ENCODE measurements at regions of chr2 and their contacts with region 1.

Region 1: GRCh38 chr2:151289369-151290088 is at the start of gene NMI:
- DNase-seq: peak; percentile 60 to 73 (median 66)
- H3K4me3 ChIP-seq: peak within 1 kb of the TSS; percentile 69 to 89 (median 78)
- H3K4me3 Mint-ChIP-seq: peak within 1 kb of the TSS; percentile 87 to 94
- H3K27ac ChIP-seq: peak within 1 kb of the TSS; percentile 97 to 98
- H3K27ac Mint-ChIP-seq: peak within 1 kb of the TSS; percentile 93 to 99 (median 97)
- H3K4me1 ChIP-seq: peaks cover 45 to 54% of the 10 kb centered on the region in 2 donors
- H3K4me1 Mint-ChIP-seq: peaks cover 53% of the 10 kb centered on the region
- H3K27me3 ChIP-seq: no peaks in the 10 kb centered on the region
- H3K27me3 Mint-ChIP-seq: no peaks in the 10 kb centered on the region
- CTCF ChIP-seq: no peak
- polyA plus RNA-seq, gene NMI: 21.8 to 83.0 (median 72.3) TPM

Region 2: GRCh38 chr2:149587220-149587949 is 1702.1 kb before region 1 on chr2 and contains the start of gene MMADHC:
- intact Hi-C with region 1: loop called in 1 of 2 experiments (anchors 5 kb)
- DNase-seq: peak; percentile 88 to 95 (median 94)
- H3K4me3 ChIP-seq: peak within 1 kb of the TSS; percentile 70 to 96 (median 90)
- H3K4me3 Mint-ChIP-seq: peak within 1 kb of the TSS; percentile 94 to 99
- H3K27ac ChIP-seq: peak within 1 kb of the TSS; percentile 91 to 99
- H3K27ac Mint-ChIP-seq: peak within 1 kb of the TSS; percentile 97 to 100 (median 99)
- H3K4me1 ChIP-seq: peaks cover 20 to 25% of the 10 kb centered on the region in 2 donors
- H3K4me1 Mint-ChIP-seq: peaks cover 29% of the 10 kb centered on the region
- H3K27me3 ChIP-seq: peaks cover 4 to 6% of the 10 kb centered on the region in 2 donors
- H3K27me3 Mint-ChIP-seq: peaks cover 0 to 9% (median 7%) of the 10 kb centered on the region in 3 donors
- CTCF ChIP-seq: no peak
- polyA plus RNA-seq, gene MMADHC: 20.5 to 119 (median 97.9) TPM

Region 3: GRCh38 chr2:151357359-151357758 is 67.8 kb after region 1 on chr2 and contains the start of gene TNFAIP6:
- intact Hi-C with region 1: loop called (anchors 5 kb)
- DNase-seq: peak; percentile 88 to 96 (median 95)
- H3K4me3 ChIP-seq: peak within 1 kb of the TSS in 2 of 3 experiments; percentile 19 to 57
- H3K4me3 Mint-ChIP-seq: peak within 1 kb of the TSS in 1 of 2 donors; percentile 57
- H3K27ac ChIP-seq: peak within 1 kb of the TSS in 1 of 2 donors; percentile 79
- H3K27ac Mint-ChIP-seq: peak within 1 kb of the TSS; percentile 82 to 94 (median 91)
- H3K4me1 ChIP-seq: peaks cover 9 to 30% of the 10 kb centered on the region in 2 donors
- H3K4me1 Mint-ChIP-seq: peaks cover 17% of the 10 kb centered on the region
- H3K27me3 ChIP-seq: no peaks in the 10 kb centered on the region
- H3K27me3 Mint-ChIP-seq: no peaks in the 10 kb centered on the region
- CTCF ChIP-seq: no peak
- polyA plus RNA-seq, gene TNFAIP6: 2.6 to 8.2 (median 3.5) TPM

Region 4: GRCh38 chr2:151363709-151364108 is 74.2 kb after region 1 on chr2:
- intact Hi-C with region 1: loop called (anchors 5 kb)
- DNase-seq: peak; percentile 75 to 98 (median 84)
- H3K4me3 ChIP-seq: peak overlapping the region in 1 of 3 experiments; percentile 21
- H3K4me3 Mint-ChIP-seq: peak overlapping the region; percentile 55
- H3K27ac ChIP-seq: peak overlapping the region; percentile 54 to 62
- H3K27ac Mint-ChIP-seq: peak overlapping the region; percentile 76 to 93 (median 88)
- H3K4me1 ChIP-seq: peaks cover 10 to 21% of the 10 kb centered on the region in 2 donors
- H3K4me1 Mint-ChIP-seq: peaks cover 12% of the 10 kb centered on the region
- H3K27me3 ChIP-seq: no peaks in the 10 kb centered on the region
- H3K27me3 Mint-ChIP-seq: no peaks in the 10 kb centered on the region
- CTCF ChIP-seq: no peak

Region 5: DNA sequence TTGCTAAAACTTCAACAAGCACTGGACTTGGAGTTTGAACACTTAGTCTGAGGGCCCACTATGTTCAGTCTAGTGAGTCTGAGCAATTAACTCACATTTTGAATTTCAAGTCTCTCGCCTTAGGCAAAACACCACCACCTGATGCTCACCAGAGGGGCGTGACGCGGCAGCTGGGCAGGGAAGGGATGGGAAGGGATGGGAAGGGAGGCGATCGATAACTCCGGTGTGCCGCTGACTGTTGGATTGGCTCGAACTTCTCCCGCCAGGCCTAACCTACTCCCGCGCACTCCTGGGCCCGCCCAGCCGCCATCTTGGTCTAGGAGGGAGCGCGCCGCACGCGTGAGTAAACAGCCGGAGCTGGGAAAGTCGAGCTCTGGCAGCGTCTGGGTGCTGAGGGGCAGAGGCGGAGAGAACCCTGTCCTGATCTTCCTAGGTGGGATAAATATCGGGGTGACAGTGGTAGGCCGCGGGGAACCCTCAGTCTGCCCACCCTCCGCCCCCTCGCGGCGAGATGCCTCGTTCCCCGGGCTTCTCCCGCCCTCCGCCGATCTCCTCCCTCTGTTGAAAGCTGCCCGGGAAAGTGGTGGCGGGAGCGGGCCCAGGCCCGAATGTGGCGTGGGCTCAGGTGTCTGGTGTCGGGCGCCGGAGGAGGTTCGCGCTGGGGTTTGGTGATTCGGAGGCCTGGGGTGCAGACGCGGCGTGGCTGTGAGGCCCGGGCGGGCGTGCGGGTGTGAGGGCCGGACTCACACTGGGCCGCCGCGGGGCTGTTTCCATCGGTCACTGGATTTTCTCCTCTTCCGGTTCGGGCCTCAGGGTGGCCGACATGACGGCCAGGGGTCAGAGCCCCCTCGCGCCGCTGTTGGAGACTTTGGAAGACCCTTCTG is 120.3 kb after region 1 on chr2 and contains the start of gene RIF1:
- intact Hi-C with region 1: loop called (anchors 5 kb)
- DNase-seq: peak; percentile 55 to 67 (median 65)
- H3K4me3 ChIP-seq: peak within 1 kb of the TSS; percentile 68 to 96 (median 91)
- H3K4me3 Mint-ChIP-seq: peak within 1 kb of the TSS; percentile 99
- H3K27ac ChIP-seq: peak within 1 kb of the TSS; percentile 89
- H3K27ac Mint-ChIP-seq: peak within 1 kb of the TSS; percentile 92 to 97 (median 95)
- H3K4me1 ChIP-seq: peaks cover 9 to 21% of the 10 kb centered on the region in 2 donors
- H3K4me1 Mint-ChIP-seq: peaks cover 18% of the 10 kb centered on the region
- H3K27me3 ChIP-seq: no peaks in the 10 kb centered on the region
- H3K27me3 Mint-ChIP-seq: peaks cover 0 to 4% (median 0%) of the 10 kb centered on the region in 3 donors
- CTCF ChIP-seq: peak; percentile 73
- polyA plus RNA-seq, gene RIF1: 3.8 to 9.3 (median 6.5) TPM

Region 6: GRCh38 chr2:152717228-152718075 is 1427.9 kb after region 1 on chr2 and contains the start of gene PRPF40A:
- intact Hi-C with region 1: loop called in 1 of 2 experiments (anchors 10 kb)
- DNase-seq: peak; percentile 98 to 99 (median 99)
- H3K4me3 ChIP-seq: peak within 1 kb of the TSS; percentile 88 to 96 (median 95)
- H3K4me3 Mint-ChIP-seq: peak within 1 kb of the TSS; percentile 97 to 100
- H3K27ac ChIP-seq: peak within 1 kb of the TSS; percentile 97 to 98
- H3K27ac Mint-ChIP-seq: peak within 1 kb of the TSS; percentile 94 to 99 (median 98)
- H3K4me1 ChIP-seq: peaks cover 25 to 36% of the 10 kb centered on the region in 2 donors
- H3K4me1 Mint-ChIP-seq: peaks cover 38% of the 10 kb centered on the region
- H3K27me3 ChIP-seq: no peaks in the 10 kb centered on the region
- H3K27me3 Mint-ChIP-seq: peaks cover 0 to 2% (median 0%) of the 10 kb centered on the region in 3 donors
- CTCF ChIP-seq: no peak
- polyA plus RNA-seq, gene PRPF40A: 56.0 to 95.4 (median 66.6) TPM